Activated CD4-positive, alpha-beta T cell treated with anti-CD3 and anti-CD28 coated beads for 36 hours (primary cell): ENCODE measurements at regions of chr19 and their contacts with region 1.

Region 1: DNA sequence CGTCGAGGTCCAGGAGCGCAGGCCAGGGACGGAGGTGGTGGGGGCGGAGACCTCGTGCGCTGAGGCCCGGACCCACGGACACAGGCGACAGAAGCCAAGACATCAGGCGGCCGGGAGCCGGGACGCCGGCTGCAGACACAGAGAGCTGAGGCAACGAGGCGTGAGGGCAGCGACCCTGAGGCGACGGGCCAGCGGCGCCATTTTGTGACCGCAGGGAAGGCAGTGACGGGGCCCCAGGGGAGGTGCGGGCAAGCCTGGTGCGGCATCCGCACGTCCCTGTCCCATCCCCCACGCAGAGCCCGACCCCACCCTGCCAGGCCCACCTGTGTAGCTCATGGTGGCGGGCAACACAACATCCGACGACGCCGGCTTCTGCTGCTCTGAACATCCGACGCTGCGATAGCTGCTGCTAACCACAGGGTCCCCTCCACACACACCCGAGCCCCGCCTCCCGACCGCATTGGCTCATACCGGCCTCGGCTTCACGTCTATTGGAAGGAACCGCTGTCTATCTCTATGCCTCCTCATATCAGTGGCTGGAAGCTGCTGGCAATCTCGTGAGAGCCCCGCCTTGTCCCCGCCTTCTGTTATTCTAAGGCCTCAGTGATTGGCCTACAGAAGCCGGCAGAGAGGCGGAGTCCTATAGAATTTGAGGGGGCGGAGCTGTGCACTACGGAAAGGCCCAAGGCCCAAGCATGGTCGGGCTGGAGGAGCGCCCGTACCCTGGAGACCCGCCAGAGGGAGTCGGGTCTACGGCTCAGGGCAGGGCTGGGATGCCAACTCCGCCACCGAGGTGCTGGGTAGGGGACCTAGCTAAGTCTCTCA is at the start of gene AKAP8L:
- DNase-seq: peak; percentile 99
- ATAC-seq: peak; percentile 98
- H3K4me3 Mint-ChIP-seq: peak within 1 kb of the TSS; percentile 98
- H3K27ac Mint-ChIP-seq: peak within 1 kb of the TSS; percentile 98
- H3K4me1 Mint-ChIP-seq: peaks cover 37% of the 10 kb centered on the region
- H3K27me3 Mint-ChIP-seq: no peaks in the 10 kb centered on the region
- total RNA-seq, gene AKAP8L: 76.2 to 89.9 TPM

Region 2: GRCh38 chr19:15177269-15178116 is 241.3 kb before region 1 on chr19:
- CTCF ChIA-PET with region 1: interaction called, 3 read pairs
- POLR2A ChIA-PET with region 1: no interaction called
- intact Hi-C with region 1: loop called (anchors 1 kb)
- DNase-seq: peak; percentile 92
- ATAC-seq: peak; percentile 98
- H3K4me3 Mint-ChIP-seq: peak overlapping the region; percentile 7
- H3K27ac Mint-ChIP-seq: no peak overlapping the region
- H3K4me1 Mint-ChIP-seq: peaks cover 4% of the 10 kb centered on the region
- H3K27me3 Mint-ChIP-seq: peaks cover 13% of the 10 kb centered on the region

Region 3: GRCh38 chr19:15332311-15332996 is 86.3 kb before region 1 on chr19 and contains the start of gene BRD4:
- CTCF ChIA-PET with region 1: interaction called, 3 read pairs
- POLR2A ChIA-PET with region 1: interaction called, 4 read pairs
- intact Hi-C with region 1: loop called (anchors 1 to 5 kb)
- DNase-seq: peak; percentile 87
- ATAC-seq: peak; percentile 43
- H3K4me3 Mint-ChIP-seq: peak within 1 kb of the TSS; percentile 94
- H3K27ac Mint-ChIP-seq: peak within 1 kb of the TSS; percentile 96
- H3K4me1 Mint-ChIP-seq: peaks cover 38% of the 10 kb centered on the region
- H3K27me3 Mint-ChIP-seq: no peaks in the 10 kb centered on the region
- total RNA-seq, gene BRD4: 106 to 126 TPM

Region 4: GRCh38 chr19:15432629-15433518 is 14.1 kb after region 1 on chr19:
- CTCF ChIA-PET with region 1: interaction called, 41 read pairs
- POLR2A ChIA-PET with region 1: interaction called, 19 read pairs
- intact Hi-C with region 1: loop called (anchors 1 kb)
- DNase-seq: peak; percentile 97
- ATAC-seq: peak; percentile 87
- H3K4me3 Mint-ChIP-seq: peak overlapping the region; percentile 87
- H3K27ac Mint-ChIP-seq: peak overlapping the region; percentile 91
- H3K4me1 Mint-ChIP-seq: peaks cover 26% of the 10 kb centered on the region
- H3K27me3 Mint-ChIP-seq: no peaks in the 10 kb centered on the region

Region 5: DNA sequence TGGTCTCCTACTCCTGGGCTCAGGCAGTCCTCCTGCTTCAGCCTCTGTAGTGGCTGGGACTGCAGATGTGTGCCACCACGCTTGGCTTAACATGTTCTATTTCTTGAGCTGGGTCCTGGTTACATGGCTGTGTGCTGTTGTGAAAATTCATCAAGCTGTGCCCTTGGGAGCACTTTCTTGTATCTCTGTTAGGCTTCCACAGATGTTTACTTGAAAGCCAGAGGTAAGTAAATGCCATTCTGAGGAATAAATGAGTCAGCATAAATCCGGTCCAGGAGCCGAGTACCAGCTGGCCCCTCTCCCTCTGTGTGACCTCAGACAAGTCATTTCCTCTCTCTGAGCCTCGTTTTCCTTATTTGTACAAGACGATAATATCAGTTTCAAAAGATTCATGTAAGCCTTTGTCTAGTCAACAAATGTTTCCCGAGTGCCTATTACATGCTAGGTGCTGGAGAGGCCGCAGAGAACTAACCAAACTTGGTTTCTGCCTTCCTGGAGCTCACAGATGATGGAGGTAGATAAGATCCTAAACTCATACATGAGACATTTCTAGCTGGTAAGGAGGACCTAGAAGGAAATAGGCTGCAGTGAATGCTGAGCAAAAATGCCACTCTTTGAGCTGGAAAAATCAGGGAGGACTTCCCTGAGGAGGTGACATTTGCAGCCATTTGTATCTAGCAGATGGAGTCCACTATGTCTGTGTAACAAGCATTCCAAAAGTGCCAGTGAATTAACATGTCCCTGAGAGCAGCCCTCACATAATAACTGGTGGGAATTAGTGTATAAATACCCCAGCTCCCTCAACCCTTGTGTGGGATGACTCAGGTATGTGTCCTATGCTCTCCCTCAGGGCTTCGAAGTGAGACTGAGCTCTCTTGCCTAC is 48.3 kb after region 1 on chr19:
- CTCF ChIA-PET with region 1: interaction called, 17 read pairs
- POLR2A ChIA-PET with region 1: interaction called, 4 read pairs
- intact Hi-C with region 1: loop called (anchors 1 to 2 kb)
- DNase-seq: peak; percentile 80
- ATAC-seq: peak; percentile 62
- H3K4me3 Mint-ChIP-seq: peak overlapping the region; percentile 47
- H3K27ac Mint-ChIP-seq: peak overlapping the region; percentile 95
- H3K4me1 Mint-ChIP-seq: peaks cover 62% of the 10 kb centered on the region
- H3K27me3 Mint-ChIP-seq: peaks cover 3% of the 10 kb centered on the region

Region 6: GRCh38 chr19:15555759-15556633 is 137.2 kb after region 1 on chr19:
- CTCF ChIA-PET with region 1: interaction called, 72 read pairs
- POLR2A ChIA-PET with region 1: interaction called, 13 read pairs
- intact Hi-C with region 1: loop called (anchors 1 kb)
- DNase-seq: peak; percentile 99
- ATAC-seq: peak; percentile 86
- H3K4me3 Mint-ChIP-seq: peak overlapping the region; percentile 73
- H3K27ac Mint-ChIP-seq: peak overlapping the region; percentile 85
- H3K4me1 Mint-ChIP-seq: peaks cover 18% of the 10 kb centered on the region
- H3K27me3 Mint-ChIP-seq: peaks cover 2% of the 10 kb centered on the region